Caco-2 (cell line): ENCODE measurements at regions of chr5 and their contacts with region 1.

Region 1: DNA sequence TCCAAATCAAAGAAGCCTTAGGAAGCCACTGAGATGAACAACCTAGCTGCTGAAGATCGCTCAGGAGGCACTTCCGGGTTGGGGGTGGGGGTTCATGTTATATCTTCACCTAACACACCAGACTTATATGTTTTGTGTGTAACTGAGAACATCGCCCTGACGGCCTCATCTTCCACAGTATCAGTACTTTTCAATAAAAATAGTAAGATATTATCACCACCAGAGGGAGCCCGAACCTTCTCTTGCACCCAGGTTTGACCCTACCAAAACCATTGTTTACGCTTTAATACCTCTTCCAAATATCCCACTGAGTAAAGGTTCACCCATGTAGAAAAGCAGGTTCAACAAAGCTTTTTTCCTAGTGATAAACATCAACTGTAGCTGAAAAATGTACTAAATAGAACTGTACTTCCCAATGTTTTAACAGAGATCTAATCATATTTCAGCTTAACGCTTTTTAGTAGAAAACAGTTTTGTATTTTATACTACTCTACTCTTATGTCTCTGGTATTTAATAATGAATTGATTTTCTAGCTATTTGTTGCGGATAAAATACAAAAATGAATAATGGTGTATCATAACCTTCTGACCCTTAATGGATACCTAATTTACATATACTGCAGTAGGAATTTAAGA is 244.0 kb downstream of the EPB41L4A start:
- DNase-seq: peak in 1 of 2 experiments; percentile 56
- H3K4me3 ChIP-seq: no peak overlapping the region
- H3K4me3 Mint-ChIP-seq: no peak overlapping the region
- H3K27ac Mint-ChIP-seq: no peak overlapping the region
- H3K4me1 ChIP-seq: peaks cover 3% of the 10 kb centered on the region; the same call in 1 of the 2 replicates
- H3K4me1 Mint-ChIP-seq: no peaks in the 10 kb centered on the region
- H3K27me3 ChIP-seq: no peaks in the 10 kb centered on the region
- H3K27me3 Mint-ChIP-seq: no peaks in the 10 kb centered on the region
- CTCF ChIP-seq: peak; percentile 50 to 66

Region 2: GRCh38 chr5:112239996-112240395 is 64.9 kb after region 1 on chr5:
- CTCF ChIA-PET with region 1: interaction called, 4 read pairs
- POLR2A ChIA-PET with region 1: no interaction called
- intact Hi-C with region 1: loop called (anchors 1 kb)
- DNase-seq: peak; percentile 41 to 47
- H3K4me3 ChIP-seq: no peak overlapping the region
- H3K4me3 Mint-ChIP-seq: no peak overlapping the region
- H3K27ac Mint-ChIP-seq: no peak overlapping the region
- H3K4me1 ChIP-seq: no peaks in the 10 kb centered on the region
- H3K4me1 Mint-ChIP-seq: peaks cover 6% of the 10 kb centered on the region
- H3K27me3 ChIP-seq: no peaks in the 10 kb centered on the region
- H3K27me3 Mint-ChIP-seq: peaks cover 3% of the 10 kb centered on the region
- CTCF ChIP-seq: peak in 1 of 2 experiments; percentile 39

Region 3: DNA sequence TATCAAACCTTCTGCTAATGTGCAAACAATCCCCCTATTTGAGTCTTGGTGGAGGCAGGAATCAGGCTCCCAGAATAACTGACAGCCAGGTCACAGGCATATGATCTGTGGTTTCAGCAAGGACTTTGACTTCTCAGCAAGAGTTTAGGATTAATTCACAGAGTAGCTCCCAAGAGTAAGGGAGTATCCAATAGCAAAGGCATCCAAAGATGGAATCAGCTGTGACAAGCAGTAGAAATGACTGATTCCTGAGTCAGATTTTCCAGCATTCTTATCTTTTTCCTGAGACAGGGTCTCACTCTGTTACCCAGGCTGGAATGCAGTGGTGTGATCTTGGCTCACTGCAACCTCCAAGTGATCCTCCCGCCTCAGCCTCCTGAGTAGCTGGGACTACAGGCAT is 135.7 kb after region 1 on chr5:
- CTCF ChIA-PET with region 1: no interaction called
- POLR2A ChIA-PET with region 1: no interaction called
- intact Hi-C with region 1: no loop called
- DNase-seq: no peak
- H3K4me3 ChIP-seq: no peak overlapping the region
- H3K4me3 Mint-ChIP-seq: no peak overlapping the region
- H3K27ac Mint-ChIP-seq: no peak overlapping the region
- H3K4me1 ChIP-seq: no peaks in the 10 kb centered on the region
- H3K4me1 Mint-ChIP-seq: no peaks in the 10 kb centered on the region
- H3K27me3 ChIP-seq: no peaks in the 10 kb centered on the region
- H3K27me3 Mint-ChIP-seq: peaks cover 16% of the 10 kb centered on the region
- CTCF ChIP-seq: no peak

Region 4: DNA sequence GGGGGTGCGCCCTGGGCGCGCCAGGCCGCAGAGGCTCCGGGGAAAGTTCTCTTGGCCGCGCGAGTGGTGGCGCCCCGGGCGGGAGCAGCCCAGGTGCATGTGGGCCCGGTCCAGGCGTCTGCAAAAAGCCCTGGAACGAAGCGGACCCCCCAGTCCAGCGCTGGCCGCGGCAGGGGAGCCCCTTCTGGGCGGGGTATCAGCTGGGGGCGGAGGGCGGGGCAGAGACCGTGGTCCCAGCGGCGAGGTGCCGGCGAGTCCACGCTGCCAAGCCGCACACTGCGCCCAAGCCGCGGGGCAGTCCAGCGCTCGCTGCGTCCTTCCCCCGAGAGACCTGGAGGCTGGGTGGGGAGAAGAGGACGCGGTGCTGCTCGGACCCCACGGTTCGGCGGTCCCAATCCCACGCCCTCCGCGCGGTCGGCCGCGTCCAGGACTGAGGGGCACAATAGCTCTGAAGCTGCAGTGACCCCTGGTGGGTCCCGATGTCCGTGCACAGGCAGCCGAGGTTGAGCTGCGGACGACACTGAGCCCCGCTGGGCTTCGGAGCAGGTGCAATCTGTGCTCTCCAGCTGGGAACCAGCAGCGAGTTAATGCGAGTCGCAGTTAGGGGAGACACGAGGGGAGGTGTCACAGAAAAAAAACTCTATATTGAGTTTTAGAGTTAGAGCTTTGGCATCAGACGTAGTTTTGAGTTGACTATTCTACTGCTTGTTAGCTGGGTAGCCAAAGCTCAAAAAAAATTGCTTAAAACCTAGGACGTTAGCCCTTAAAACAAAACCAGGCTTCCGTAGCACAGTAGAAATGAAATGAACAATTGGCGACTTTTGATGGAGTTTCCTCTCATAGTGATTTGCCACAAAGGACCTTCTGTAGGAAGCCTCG is 245.1 kb after region 1 on chr5:
- CTCF ChIA-PET with region 1: interaction called, 5 read pairs
- POLR2A ChIA-PET with region 1: no interaction called
- intact Hi-C with region 1: loop called (anchors 1 kb)
- DNase-seq: peak; percentile 72 to 84
- H3K4me3 ChIP-seq: peak overlapping the region; percentile 58
- H3K4me3 Mint-ChIP-seq: peak overlapping the region; percentile 76
- H3K27ac Mint-ChIP-seq: no peak overlapping the region
- H3K4me1 ChIP-seq: peaks cover 10% of the 10 kb centered on the region
- H3K4me1 Mint-ChIP-seq: peaks cover 8% of the 10 kb centered on the region
- H3K27me3 ChIP-seq: peaks cover 8% of the 10 kb centered on the region
- H3K27me3 Mint-ChIP-seq: peaks cover 25% of the 10 kb centered on the region
- CTCF ChIP-seq: peak; percentile 91 to 92

Region 5: DNA sequence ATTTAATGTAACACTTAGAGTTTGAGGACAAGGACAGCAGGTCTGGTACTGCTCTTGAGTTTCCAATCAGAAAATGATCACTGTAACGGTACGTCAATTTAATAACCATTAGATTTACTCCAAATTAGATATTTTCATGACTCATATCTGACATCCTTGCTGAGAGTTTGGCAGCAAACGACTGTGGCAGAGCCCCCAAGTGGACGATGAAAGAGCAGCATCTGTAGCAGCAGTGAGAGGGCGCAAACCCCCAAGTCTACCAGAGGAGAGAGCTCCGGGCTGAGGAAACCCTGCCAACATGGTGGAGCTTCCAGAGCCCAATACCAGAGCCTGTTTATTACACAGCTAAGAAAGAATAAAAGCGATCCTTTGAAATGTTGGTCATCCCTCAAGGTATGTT is 317.2 kb after region 1 on chr5:
- CTCF ChIA-PET with region 1: no interaction called
- POLR2A ChIA-PET with region 1: no interaction called
- intact Hi-C with region 1: loop called (anchors 2 kb)
- DNase-seq: peak; percentile 48 to 52
- H3K4me3 ChIP-seq: no peak overlapping the region
- H3K4me3 Mint-ChIP-seq: no peak overlapping the region
- H3K27ac Mint-ChIP-seq: no peak overlapping the region
- H3K4me1 ChIP-seq: no peaks in the 10 kb centered on the region
- H3K4me1 Mint-ChIP-seq: no peaks in the 10 kb centered on the region
- H3K27me3 ChIP-seq: no peaks in the 10 kb centered on the region
- H3K27me3 Mint-ChIP-seq: peaks cover 9% of the 10 kb centered on the region
- CTCF ChIP-seq: peak; percentile 39 to 70

Region 6: GRCh38 chr5:112529525-112529924 is 354.4 kb after region 1 on chr5:
- CTCF ChIA-PET with region 1: no interaction called
- POLR2A ChIA-PET with region 1: no interaction called
- intact Hi-C with region 1: loop called (anchors 1 kb)
- DNase-seq: no peak
- H3K4me3 ChIP-seq: no peak overlapping the region
- H3K4me3 Mint-ChIP-seq: no peak overlapping the region
- H3K27ac Mint-ChIP-seq: no peak overlapping the region
- H3K4me1 ChIP-seq: no peaks in the 10 kb centered on the region
- H3K4me1 Mint-ChIP-seq: no peaks in the 10 kb centered on the region
- H3K27me3 ChIP-seq: no peaks in the 10 kb centered on the region
- H3K27me3 Mint-ChIP-seq: peaks cover under 1% of the 10 kb centered on the region
- CTCF ChIP-seq: peak; percentile 18 to 34

Region 7: DNA sequence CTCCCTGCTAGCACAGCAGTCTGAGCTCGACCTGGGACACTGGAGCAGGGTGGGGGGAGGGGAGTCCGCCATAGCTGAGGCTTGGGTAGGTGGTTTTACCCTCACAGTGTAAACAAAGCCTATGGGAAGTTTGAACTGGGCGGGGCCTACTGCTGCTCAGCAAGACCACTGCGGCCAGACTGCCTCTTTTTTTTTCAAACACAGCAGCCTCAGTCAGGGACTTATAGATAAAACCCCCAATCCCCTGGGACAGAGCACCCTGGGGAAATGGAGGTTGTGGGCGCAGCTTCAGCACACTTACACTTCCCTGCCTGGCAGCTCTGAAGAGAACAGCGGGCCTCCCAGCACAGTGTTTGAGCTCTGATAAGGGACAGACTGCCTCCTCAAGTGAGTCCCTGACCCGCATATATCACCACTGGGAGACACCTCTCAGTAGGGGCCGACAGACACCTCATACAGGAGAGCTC is 411.6 kb after region 1 on chr5:
- CTCF ChIA-PET with region 1: no interaction called
- POLR2A ChIA-PET with region 1: no interaction called
- intact Hi-C with region 1: no loop called
- DNase-seq: no peak
- H3K4me3 ChIP-seq: no peak overlapping the region
- H3K4me3 Mint-ChIP-seq: no peak overlapping the region
- H3K27ac Mint-ChIP-seq: no peak overlapping the region
- H3K4me1 ChIP-seq: 0 out of 2 replicates have a peak, but pooled peaks cover 15% of the 10 kb centered on the region
- H3K4me1 Mint-ChIP-seq: no peaks in the 10 kb centered on the region
- H3K27me3 ChIP-seq: no peaks in the 10 kb centered on the region
- H3K27me3 Mint-ChIP-seq: peaks cover 11% of the 10 kb centered on the region
- CTCF ChIP-seq: no peak

Region 8: DNA sequence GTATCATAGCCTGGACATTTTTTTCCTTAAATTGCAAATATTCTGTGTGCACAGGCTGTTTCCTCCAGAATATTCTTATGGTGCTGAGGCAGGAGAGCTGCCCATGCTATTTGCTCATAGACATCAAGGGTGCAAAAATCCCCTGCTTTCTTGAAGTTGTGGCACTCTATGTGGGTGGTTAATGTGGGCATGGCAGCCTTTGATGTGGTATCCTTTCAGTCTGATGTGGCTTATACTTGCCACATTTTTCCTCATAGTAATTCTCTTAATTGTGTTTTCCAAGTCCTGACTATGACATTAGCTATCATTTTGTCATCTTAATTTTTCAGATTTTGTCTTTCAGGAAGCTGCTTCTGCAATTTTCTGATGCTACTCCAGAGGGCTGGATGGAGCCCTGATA is 1691.7 kb after region 1 on chr5:
- CTCF ChIA-PET with region 1: no interaction called
- POLR2A ChIA-PET with region 1: no interaction called
- intact Hi-C with region 1: no loop called
- DNase-seq: no peak
- H3K4me3 ChIP-seq: no peak overlapping the region
- H3K4me3 Mint-ChIP-seq: no peak overlapping the region
- H3K27ac Mint-ChIP-seq: no peak overlapping the region
- H3K4me1 ChIP-seq: no peaks in the 10 kb centered on the region
- H3K4me1 Mint-ChIP-seq: no peaks in the 10 kb centered on the region
- H3K27me3 ChIP-seq: no peaks in the 10 kb centered on the region
- H3K27me3 Mint-ChIP-seq: peaks cover 3% of the 10 kb centered on the region
- CTCF ChIP-seq: no peak